Right ventricle myocardium inferior (tissue), 1 donor: ENCODE measurements at regions of chr11 and their contacts with region 1.

Region 1: GRCh38 chr11:3797329-3798095 is at the start of gene NUP98:
- DNase-seq: peak; percentile 100
- ATAC-seq: peak; percentile 98
- total RNA-seq, gene NUP98: 40.4 TPM

Region 2: DNA sequence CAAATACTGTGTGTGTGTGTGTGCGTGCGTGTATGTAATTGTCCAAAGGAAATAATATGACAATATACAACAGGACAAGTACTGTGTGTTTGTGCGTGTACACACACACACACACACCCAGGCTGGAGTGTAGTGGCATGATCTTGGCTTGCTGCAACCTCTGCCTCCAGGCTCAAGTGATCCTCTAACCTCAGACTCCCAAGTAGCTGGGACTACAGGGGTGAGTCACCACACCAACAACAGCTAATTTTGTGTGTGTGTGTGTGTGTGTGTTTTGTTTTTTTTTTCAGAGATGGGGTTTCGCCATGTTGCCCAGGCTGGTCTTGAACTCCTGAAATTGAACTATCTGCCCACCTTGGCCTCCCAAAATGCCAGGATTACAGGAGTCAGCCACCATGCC is 61.7 kb before region 1 on chr11:
- intact Hi-C with region 1: no loop called
- DNase-seq: no peak
- ATAC-seq: no peak

Region 3: GRCh38 chr11:3764266-3764665 is 33.2 kb before region 1 on chr11:
- intact Hi-C with region 1: no loop called
- DNase-seq: no peak
- ATAC-seq: no peak

Region 4: GRCh38 chr11:3841426-3842350 is 44.2 kb after region 1 on chr11:
- intact Hi-C with region 1: loop called (anchors 1 kb)
- DNase-seq: peak; percentile 93
- ATAC-seq: peak; percentile 81

Region 5: GRCh38 chr11:4094348-4095291 is 297.1 kb after region 1 on chr11 and contains the start of gene RRM1:
- intact Hi-C with region 1: loop called (anchors 5 kb)
- DNase-seq: peak; percentile 95
- ATAC-seq: peak; percentile 98
- total RNA-seq, gene RRM1: 25.3 TPM